ENCODE measurements at regions of chr9 and their contacts with region 1.

Region 1: GRCh38 chr9:115008536-115009270 is 78.3 kb upstream of the TNFSF8 start:
- DNase-seq: peak; percentile 81 to 94 (median 93)
- H3K4me3 ChIP-seq: no peak overlapping the region
- H3K4me3 Mint-ChIP-seq: no peak overlapping the region
- H3K27ac ChIP-seq: peak overlapping the region in 1 of 2 donors; percentile 55
- H3K27ac Mint-ChIP-seq: peak overlapping the region; percentile 38 to 93 (median 73)
- H3K4me1 ChIP-seq: peaks cover 32 to 47% of the 10 kb centered on the region in 2 donors
- H3K4me1 Mint-ChIP-seq: peaks cover 65% of the 10 kb centered on the region
- H3K27me3 ChIP-seq: no peaks in the 10 kb centered on the region
- H3K27me3 Mint-ChIP-seq: peaks cover 0 to 3% (median 2%) of the 10 kb centered on the region in 3 donors
- CTCF ChIP-seq: no peak

Region 2: DNA sequence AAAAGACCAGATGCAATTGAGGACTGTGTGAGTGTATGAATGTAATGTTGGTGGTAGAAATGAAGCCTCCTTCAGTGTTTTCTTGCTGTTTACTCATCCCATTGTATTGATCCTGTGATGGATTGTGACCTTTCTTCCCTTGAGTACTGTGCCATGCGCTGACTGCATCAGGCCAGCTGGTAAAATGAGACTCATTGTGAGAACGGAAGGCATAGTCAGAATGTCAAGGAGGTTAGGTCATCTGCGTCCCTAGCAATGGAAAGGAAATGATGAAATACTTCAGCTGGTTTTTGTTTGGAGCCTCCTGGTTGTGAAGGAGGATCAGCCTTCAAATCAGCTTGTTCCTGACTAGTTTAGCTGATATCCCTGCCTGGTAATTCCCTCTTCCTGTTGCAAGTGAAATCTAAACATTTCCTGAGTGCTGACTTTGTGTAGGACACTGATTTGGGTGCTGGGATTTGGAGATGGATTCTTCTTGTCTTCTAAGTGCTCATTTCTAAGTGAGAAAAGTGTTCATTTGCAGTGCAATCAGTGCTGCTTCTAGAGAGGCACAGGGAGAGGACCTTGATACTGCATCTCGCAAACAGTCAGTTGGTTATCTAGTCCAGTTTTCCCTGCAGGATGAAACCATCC is 113.8 kb before region 1 on chr9:
- intact Hi-C with region 1: loop called in 1 of 2 experiments (anchors 2 kb)
- DNase-seq: peak; percentile 74 to 92 (median 85)
- H3K4me3 ChIP-seq: peak overlapping the region in 1 of 3 experiments; percentile 21
- H3K4me3 Mint-ChIP-seq: peak overlapping the region in 1 of 2 donors; percentile 39
- H3K27ac ChIP-seq: peak overlapping the region in 1 of 2 donors; percentile 84
- H3K27ac Mint-ChIP-seq: peak overlapping the region; percentile 84 to 97 (median 92)
- H3K4me1 ChIP-seq: peaks cover 68 to 70% of the 10 kb centered on the region in 2 donors
- H3K4me1 Mint-ChIP-seq: peaks cover 42% of the 10 kb centered on the region
- H3K27me3 ChIP-seq: no peaks in the 10 kb centered on the region
- H3K27me3 Mint-ChIP-seq: peaks cover 0 to 1% (median 0%) of the 10 kb centered on the region in 3 donors
- CTCF ChIP-seq: no peak

Region 3: GRCh38 chr9:114930056-114930812 is 78.5 kb before region 1 on chr9 and contains the start of gene TNFSF8:
- intact Hi-C with region 1: loop called in 1 of 2 experiments (anchors 5 kb)
- DNase-seq: peak; percentile 77 to 83 (median 82)
- H3K4me3 ChIP-seq: peak within 1 kb of the TSS; percentile 82 to 91 (median 88)
- H3K4me3 Mint-ChIP-seq: peak within 1 kb of the TSS; percentile 93 to 99
- H3K27ac ChIP-seq: peak within 1 kb of the TSS; percentile 92 to 94
- H3K27ac Mint-ChIP-seq: peak within 1 kb of the TSS; percentile 97 to 100 (median 98)
- H3K4me1 ChIP-seq: peaks cover 28 to 41% of the 10 kb centered on the region in 2 donors
- H3K4me1 Mint-ChIP-seq: peaks cover 34% of the 10 kb centered on the region
- H3K27me3 ChIP-seq: no peaks in the 10 kb centered on the region
- H3K27me3 Mint-ChIP-seq: peaks cover 0 to 2% (median 0%) of the 10 kb centered on the region in 3 donors
- CTCF ChIP-seq: no peak
- polyA plus RNA-seq, gene TNFSF8: 27.8 to 42.9 (median 34.0) TPM

Region 4: DNA sequence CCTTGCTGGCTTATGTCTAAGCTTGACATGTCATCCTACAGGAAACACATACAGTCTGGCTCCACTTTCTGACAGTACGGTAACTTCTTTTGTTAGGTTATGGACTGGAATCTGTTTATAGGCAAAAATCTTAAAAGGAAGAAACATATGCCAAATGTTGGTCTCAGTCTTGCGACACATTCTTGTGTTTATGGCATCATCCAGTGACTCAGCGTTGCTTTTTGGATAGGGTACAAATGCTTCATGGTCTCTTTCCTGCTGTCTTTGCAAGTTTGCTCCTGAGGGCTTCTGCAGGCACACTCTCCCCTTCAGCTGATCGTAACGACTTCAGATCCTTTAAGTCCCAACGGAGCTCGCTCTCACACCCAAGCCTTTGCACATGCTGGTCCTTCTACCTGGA is 54.8 kb before region 1 on chr9:
- intact Hi-C with region 1: loop called (anchors 2 to 5 kb)
- DNase-seq: peak; percentile 86 to 94 (median 93)
- H3K4me3 ChIP-seq: peak overlapping the region in 2 of 3 experiments; percentile 25 to 54
- H3K4me3 Mint-ChIP-seq: peak overlapping the region; percentile 69 to 94
- H3K27ac ChIP-seq: peak overlapping the region; percentile 76 to 99
- H3K27ac Mint-ChIP-seq: peak overlapping the region; percentile 96 to 100 (median 99)
- H3K4me1 ChIP-seq: peaks cover 64 to 67% of the 10 kb centered on the region in 2 donors
- H3K4me1 Mint-ChIP-seq: peaks cover 68% of the 10 kb centered on the region
- H3K27me3 ChIP-seq: no peaks in the 10 kb centered on the region
- H3K27me3 Mint-ChIP-seq: peaks cover 0 to 2% (median 0%) of the 10 kb centered on the region in 3 donors
- CTCF ChIP-seq: no peak

Region 5: DNA sequence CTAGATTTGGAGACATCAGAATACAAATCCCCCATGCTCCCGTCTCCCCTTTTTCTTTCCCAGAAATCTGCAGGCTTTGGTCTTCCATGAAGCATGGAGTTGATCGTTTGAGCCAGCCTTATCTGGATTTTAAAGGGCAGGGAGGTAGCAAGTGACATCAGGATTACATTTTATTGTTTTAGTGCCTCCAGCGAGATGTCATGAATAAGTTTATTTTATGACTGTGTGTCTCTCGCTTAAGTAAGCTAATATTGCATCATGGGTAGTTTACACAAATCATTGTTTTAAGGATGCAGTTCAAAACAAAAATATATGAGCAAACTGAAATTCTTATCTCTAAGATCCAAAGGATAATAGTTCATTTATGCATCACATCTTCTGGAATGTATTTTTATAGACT is 27.6 kb before region 1 on chr9:
- intact Hi-C with region 1: no loop called
- DNase-seq: no peak
- H3K4me3 ChIP-seq: no peak overlapping the region
- H3K4me3 Mint-ChIP-seq: no peak overlapping the region
- H3K27ac ChIP-seq: no peak overlapping the region
- H3K27ac Mint-ChIP-seq: no peak overlapping the region
- H3K4me1 ChIP-seq: no peaks in the 10 kb centered on the region
- H3K4me1 Mint-ChIP-seq: no peaks in the 10 kb centered on the region
- H3K27me3 ChIP-seq: no peaks in the 10 kb centered on the region
- H3K27me3 Mint-ChIP-seq: no peaks in the 10 kb centered on the region
- CTCF ChIP-seq: no peak

Region 6: GRCh38 chr9:114995681-114996221 is 13.0 kb before region 1 on chr9:
- intact Hi-C with region 1: loop called in 1 of 2 experiments (anchors 1 kb)
- DNase-seq: peak; percentile 86 to 98 (median 95)
- H3K4me3 ChIP-seq: peak overlapping the region in 1 of 3 experiments; percentile 3
- H3K4me3 Mint-ChIP-seq: no peak overlapping the region
- H3K27ac ChIP-seq: peak overlapping the region; percentile 83 to 89
- H3K27ac Mint-ChIP-seq: peak overlapping the region; percentile 91 to 99 (median 96)
- H3K4me1 ChIP-seq: peaks cover 36 to 41% of the 10 kb centered on the region in 2 donors
- H3K4me1 Mint-ChIP-seq: peaks cover 44% of the 10 kb centered on the region
- H3K27me3 ChIP-seq: no peaks in the 10 kb centered on the region
- H3K27me3 Mint-ChIP-seq: peaks cover 0 to 5% (median 2%) of the 10 kb centered on the region in 3 donors
- CTCF ChIP-seq: no peak

Region 7: GRCh38 chr9:115063058-115063845 is 54.5 kb after region 1 on chr9:
- intact Hi-C with region 1: no loop called
- DNase-seq: no peak
- H3K4me3 ChIP-seq: no peak overlapping the region
- H3K4me3 Mint-ChIP-seq: no peak overlapping the region
- H3K27ac ChIP-seq: no peak overlapping the region
- H3K27ac Mint-ChIP-seq: no peak overlapping the region
- H3K4me1 ChIP-seq: no peaks in the 10 kb centered on the region
- H3K4me1 Mint-ChIP-seq: peaks cover 7% of the 10 kb centered on the region
- H3K27me3 ChIP-seq: peaks cover 0 to 3% of the 10 kb centered on the region in 2 donors
- H3K27me3 Mint-ChIP-seq: peaks cover 5 to 13% (median 8%) of the 10 kb centered on the region in 3 donors
- CTCF ChIP-seq: no peak